Naive thymus-derived CD4-positive, alpha-beta T cell (primary cell): ENCODE measurements at regions of chr9 and their contacts with region 1.

Region 1: GRCh38 chr9:137618105-137619067 is at the start of gene EHMT1:
- DNase-seq: peak; percentile 79 to 99 (median 94)
- ATAC-seq: peak; percentile 95
- H3K4me3 ChIP-seq: peak within 1 kb of the TSS; percentile 80
- H3K4me3 Mint-ChIP-seq: peak within 1 kb of the TSS; percentile 86 to 98 (median 90)
- H3K27ac ChIP-seq: peak within 1 kb of the TSS; percentile 89
- H3K27ac Mint-ChIP-seq: peak within 1 kb of the TSS; percentile 70 to 96 (median 92)
- H3K4me1 ChIP-seq: peaks cover 21 to 29% of the 10 kb centered on the region in 2 donors
- H3K4me1 Mint-ChIP-seq: peaks cover 26 to 48% (median 43%) of the 10 kb centered on the region in 7 donors
- H3K27me3 ChIP-seq: no peaks in the 10 kb centered on the region
- H3K27me3 Mint-ChIP-seq: no peaks in the 10 kb centered on the region
- total RNA-seq, gene EHMT1: 111 to 132 (median 117) TPM

Region 2: DNA sequence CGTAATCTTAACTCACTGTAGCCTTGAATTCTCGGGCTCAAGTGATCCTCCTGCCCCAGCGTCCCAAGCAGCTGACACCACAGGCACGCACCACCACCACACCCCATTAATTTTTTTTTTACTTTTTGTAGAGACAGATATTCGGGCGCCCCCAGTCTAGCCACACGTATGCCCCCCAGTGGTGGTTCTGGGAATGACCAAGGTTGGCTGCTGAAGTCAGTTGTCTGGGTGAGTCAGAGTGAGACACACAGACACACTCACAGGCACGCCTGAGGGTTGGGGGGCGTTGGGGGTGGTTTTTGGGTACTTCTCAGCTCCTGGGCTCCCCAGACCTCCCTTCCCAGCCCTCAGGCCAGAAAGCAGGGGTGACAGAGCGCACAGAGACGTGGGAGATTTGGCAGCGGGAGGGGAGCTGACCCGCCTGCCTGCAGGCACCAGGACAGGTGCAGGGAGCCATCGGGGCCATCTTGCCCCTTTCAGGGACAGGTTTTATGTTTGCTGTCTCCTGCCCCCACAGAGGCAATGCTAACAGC is 173.0 kb before region 1 on chr9:
- CTCF ChIA-PET with region 1: no interaction called
- POLR2A ChIA-PET with region 1: no interaction called
- intact Hi-C with region 1: no loop called
- DNase-seq: peak; percentile 65 to 88 (median 76)
- ATAC-seq: peak; percentile 82
- H3K4me3 ChIP-seq: no peak overlapping the region
- H3K4me3 Mint-ChIP-seq: peak overlapping the region in 4 of 10 donors; percentile 11 to 54 (median 40)
- H3K27ac ChIP-seq: no peak overlapping the region
- H3K27ac Mint-ChIP-seq: peak overlapping the region in 5 of 9 donors; percentile 2 to 77 (median 72)
- H3K4me1 ChIP-seq: peaks cover 10 to 18% of the 10 kb centered on the region in 2 donors
- H3K4me1 Mint-ChIP-seq: peaks cover 11 to 47% (median 33%) of the 10 kb centered on the region in 7 donors
- H3K27me3 ChIP-seq: no peaks in the 10 kb centered on the region
- H3K27me3 Mint-ChIP-seq: peaks cover 5 to 21% (median 10%) of the 10 kb centered on the region in 5 donors

Region 3: DNA sequence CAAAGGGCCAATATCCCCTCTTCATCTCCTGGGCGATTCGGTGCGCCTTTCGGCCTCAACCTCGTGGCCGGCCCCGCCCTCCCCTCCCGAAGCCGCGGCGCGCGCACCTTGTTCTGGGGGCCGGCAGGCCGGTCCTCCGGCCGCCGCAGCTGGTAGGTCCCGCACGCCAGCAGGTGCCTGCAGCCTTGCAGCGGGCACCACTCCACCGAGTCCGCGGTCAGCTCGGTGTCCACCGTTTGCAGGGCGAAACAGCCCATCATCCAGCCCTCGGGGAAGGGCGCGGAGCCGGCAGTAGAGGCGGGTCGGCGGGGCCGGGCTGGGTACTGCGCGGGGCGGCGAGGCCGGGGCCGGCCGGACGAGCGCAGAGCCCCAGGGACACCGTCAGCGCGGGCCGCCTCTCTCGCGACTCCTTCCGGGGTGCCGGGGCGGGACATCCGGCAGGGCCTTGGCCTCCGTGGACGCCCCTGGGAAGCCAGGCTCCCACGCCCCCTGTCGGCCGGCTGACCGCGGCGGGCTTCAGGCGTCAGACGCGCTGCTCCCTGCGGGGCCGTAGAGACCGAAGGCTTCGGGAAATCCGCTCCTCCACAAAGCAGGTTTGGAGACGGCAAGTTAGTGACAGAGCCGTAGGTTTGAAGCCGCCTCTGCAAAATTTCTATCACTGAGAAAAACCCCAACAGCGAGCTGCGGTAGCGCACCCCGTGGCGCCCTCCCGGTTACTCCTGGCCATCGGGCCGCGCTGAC is 39.7 kb before region 1 on chr9 and contains the start of gene DPH7:
- CTCF ChIA-PET with region 1: no interaction called
- POLR2A ChIA-PET with region 1: interaction called, 4 read pairs
- intact Hi-C with region 1: loop called (anchors 1 kb)
- DNase-seq: peak; percentile 84 to 98 (median 92)
- ATAC-seq: peak; percentile 99
- H3K4me3 ChIP-seq: peak within 1 kb of the TSS; percentile 83
- H3K4me3 Mint-ChIP-seq: peak within 1 kb of the TSS; percentile 72 to 90 (median 84)
- H3K27ac ChIP-seq: peak within 1 kb of the TSS; percentile 94
- H3K27ac Mint-ChIP-seq: peak within 1 kb of the TSS in 8 of 9 donors; percentile 33 to 84 (median 64)
- H3K4me1 ChIP-seq: peaks cover 8 to 13% of the 10 kb centered on the region in 2 donors
- H3K4me1 Mint-ChIP-seq: peaks cover 12 to 36% (median 30%) of the 10 kb centered on the region in 7 donors
- H3K27me3 ChIP-seq: no peaks in the 10 kb centered on the region
- H3K27me3 Mint-ChIP-seq: no peaks in the 10 kb centered on the region
- total RNA-seq, gene DPH7: 43.4 to 77.5 (median 49.9) TPM

Region 4: DNA sequence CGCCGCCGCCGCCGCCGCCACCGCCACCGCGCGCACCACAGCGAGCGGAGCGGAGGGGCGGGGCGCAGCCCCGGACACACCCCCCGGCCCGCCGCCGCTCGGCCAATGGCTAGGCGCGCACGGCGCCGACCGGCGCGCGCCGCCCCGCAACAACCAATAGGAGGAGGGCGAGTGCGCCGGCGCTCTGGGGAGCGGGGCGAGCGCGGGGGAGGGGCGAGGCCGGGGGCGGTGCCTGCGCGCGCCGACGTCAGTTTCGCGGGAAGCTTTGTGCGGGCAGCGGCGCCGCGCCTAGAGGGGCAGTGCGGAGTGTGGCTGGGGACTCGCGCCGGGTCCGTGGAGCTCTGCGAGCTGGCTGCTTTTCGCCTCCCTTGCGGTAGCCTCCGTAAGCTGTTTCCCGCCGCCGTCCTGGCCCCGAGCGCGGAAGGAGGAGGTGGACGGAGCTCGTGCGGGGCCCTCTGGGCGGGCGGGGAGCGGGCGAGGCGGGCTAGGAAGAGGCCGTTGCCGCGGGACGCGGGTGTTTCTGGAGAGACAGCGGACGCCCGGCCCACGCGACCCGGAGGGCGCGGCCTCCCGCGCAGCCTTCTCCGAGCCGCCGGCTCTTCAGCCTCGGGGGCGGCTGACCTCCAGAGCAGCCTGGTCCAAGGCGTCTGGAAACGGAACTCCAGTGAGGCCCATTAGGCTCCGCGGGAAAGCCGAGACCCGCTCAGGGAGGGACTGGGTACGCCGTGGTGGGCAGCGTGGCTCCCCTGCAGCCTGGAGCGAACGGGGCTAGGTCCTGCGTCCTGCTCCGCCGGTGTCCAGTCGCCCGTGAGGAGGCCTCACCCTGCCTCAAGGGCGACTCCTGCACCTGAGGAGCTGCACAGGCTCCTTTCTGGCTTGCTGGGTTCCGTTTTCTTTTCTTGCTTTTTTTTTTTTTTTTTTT is 27.7 kb before region 1 on chr9 and contains the start of gene ZMYND19:
- CTCF ChIA-PET with region 1: no interaction called
- POLR2A ChIA-PET with region 1: interaction called, 8 read pairs
- intact Hi-C with region 1: loop called (anchors 1 kb)
- DNase-seq: peak; percentile 84 to 97 (median 92)
- ATAC-seq: peak; percentile 99
- H3K4me3 ChIP-seq: peak within 1 kb of the TSS; percentile 64
- H3K4me3 Mint-ChIP-seq: peak within 1 kb of the TSS; percentile 88 to 96 (median 94)
- H3K27ac ChIP-seq: peak within 1 kb of the TSS; percentile 71
- H3K27ac Mint-ChIP-seq: peak within 1 kb of the TSS in 8 of 9 donors; percentile 69 to 95 (median 90)
- H3K4me1 ChIP-seq: peaks cover 0 to 12% of the 10 kb centered on the region in 2 donors
- H3K4me1 Mint-ChIP-seq: peaks cover 7 to 27% (median 16%) of the 10 kb centered on the region in 7 donors
- H3K27me3 ChIP-seq: no peaks in the 10 kb centered on the region
- H3K27me3 Mint-ChIP-seq: no peaks in the 10 kb centered on the region
- total RNA-seq, gene ZMYND19: 13.3 to 32.4 (median 26.6) TPM

Region 5: GRCh38 chr9:137632230-137633161 is 14.1 kb after region 1 on chr9:
- CTCF ChIA-PET with region 1: no interaction called
- POLR2A ChIA-PET with region 1: interaction called, 23 read pairs
- intact Hi-C with region 1: no loop called
- DNase-seq: no peak
- ATAC-seq: no peak
- H3K4me3 ChIP-seq: no peak overlapping the region
- H3K4me3 Mint-ChIP-seq: peak overlapping the region in 4 of 10 donors; percentile 8 to 29 (median 24)
- H3K27ac ChIP-seq: no peak overlapping the region
- H3K27ac Mint-ChIP-seq: peak overlapping the region in 7 of 9 donors; percentile 5 to 77 (median 36)
- H3K4me1 ChIP-seq: peaks cover 11 to 33% of the 10 kb centered on the region in 2 donors
- H3K4me1 Mint-ChIP-seq: peaks cover 43 to 84% (median 63%) of the 10 kb centered on the region in 7 donors
- H3K27me3 ChIP-seq: no peaks in the 10 kb centered on the region
- H3K27me3 Mint-ChIP-seq: no peaks in the 10 kb centered on the region